Posterior cingulate gyrus (tissue), 11 donors: ENCODE measurements at regions of chr2 and their contacts with region 1.

Region 1: GRCh38 chr2:127428057-127428814 is 10.0 kb downstream of the PROC start:
- DNase-seq: peak in 1 of 10 donors; percentile 73

Region 2: GRCh38 chr2:127134833-127135830 is 293.1 kb before region 1 on chr2:
- intact Hi-C with region 1: no loop called
- DNase-seq: peak in 1 of 10 donors; percentile 75

Region 3: DNA sequence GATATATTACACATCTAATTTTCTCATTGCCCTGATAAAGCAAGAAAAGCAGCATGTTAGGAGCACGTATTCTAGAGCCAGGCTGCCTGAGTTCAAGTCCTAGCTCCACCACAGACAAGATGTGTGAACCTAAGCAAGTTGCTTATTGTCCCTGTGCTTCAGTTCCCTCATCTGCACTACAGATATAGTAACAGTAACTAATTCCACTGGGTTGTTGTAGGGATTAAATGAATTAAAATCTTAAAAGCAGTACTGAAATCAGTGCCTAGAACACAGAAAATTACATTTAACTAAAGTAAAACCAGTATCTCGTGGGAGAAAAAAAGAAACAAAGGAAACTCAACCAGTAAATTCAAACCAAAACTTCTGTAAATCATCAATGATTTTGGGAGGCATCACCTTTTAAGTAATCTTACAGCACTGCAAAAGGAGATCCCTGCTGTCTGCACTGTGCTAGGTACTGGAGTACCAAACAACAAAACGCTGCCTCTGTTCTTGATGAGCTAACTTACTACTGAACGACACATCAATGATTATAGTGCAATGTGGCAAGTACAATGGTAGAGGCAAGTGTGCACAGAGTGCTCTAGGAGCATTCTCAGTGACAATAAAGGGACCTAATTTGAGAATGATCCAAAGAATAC is 48.4 kb before region 1 on chr2:
- intact Hi-C with region 1: loop called (anchors 1 kb)
- DNase-seq: no peak

Region 4: GRCh38 chr2:127453392-127454171 is 25.3 kb after region 1 on chr2:
- intact Hi-C with region 1: no loop called
- DNase-seq: no peak

Region 5: GRCh38 chr2:127479219-127479825 is 51.1 kb after region 1 on chr2:
- intact Hi-C with region 1: no loop called
- DNase-seq: no peak